MCF 10A (cell line): ENCODE measurements at regions of chr2 and their contacts with region 1.

Region 1: DNA sequence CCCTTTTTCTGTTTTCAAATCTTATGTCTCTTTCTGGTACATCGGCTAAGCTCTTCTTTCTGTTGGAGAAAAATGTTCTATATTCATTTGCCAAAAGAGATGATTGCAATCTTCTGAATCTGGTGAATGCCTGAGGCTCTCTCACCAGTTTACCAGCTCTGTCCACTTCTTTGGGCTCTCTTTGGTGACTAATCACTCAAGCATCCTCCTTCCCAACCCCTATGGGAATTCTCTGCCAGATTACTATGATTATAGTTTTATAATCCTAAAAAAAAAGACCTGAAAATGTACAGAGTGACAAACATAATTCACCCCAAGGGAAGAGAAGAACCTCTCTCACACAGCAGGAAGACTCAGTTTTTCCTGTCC is 187.3 kb downstream of the CAMKMT start:
- DNase-seq: peak; percentile 90
- H3K4me3 Mint-ChIP-seq: peak overlapping the region; percentile 57
- H3K27ac Mint-ChIP-seq: peak overlapping the region; percentile 93
- H3K4me1 Mint-ChIP-seq: peaks cover 69% of the 10 kb centered on the region
- H3K27me3 Mint-ChIP-seq: no peaks in the 10 kb centered on the region
- CTCF ChIP-seq: no peak

Region 2: DNA sequence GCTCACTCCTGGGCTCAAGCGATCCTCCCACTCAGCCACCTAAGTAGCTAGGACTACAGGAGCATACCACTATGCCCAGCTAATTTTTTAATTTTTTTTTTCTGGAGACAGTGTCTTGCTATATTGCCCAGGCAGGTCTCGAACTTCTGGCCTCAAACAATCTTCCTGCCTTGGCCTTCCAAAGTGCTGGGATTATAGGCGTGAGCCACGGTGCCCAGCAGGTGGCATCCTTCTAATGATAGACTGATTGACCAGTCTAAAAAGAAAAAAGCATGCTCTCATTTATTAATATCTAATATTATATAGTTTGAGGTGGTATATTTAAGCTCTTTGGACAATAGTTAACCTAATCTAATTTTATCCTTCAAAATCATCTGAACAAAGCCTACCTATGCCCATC is 11.3 kb after region 1 on chr2:
- CTCF ChIA-PET with region 1: interaction called, 5 read pairs
- POLR2A ChIA-PET with region 1: interaction called, 14 read pairs
- intact Hi-C with region 1: no loop called
- DNase-seq: peak; percentile 45
- H3K4me3 Mint-ChIP-seq: no peak overlapping the region
- H3K27ac Mint-ChIP-seq: no peak overlapping the region
- H3K4me1 Mint-ChIP-seq: peaks cover 15% of the 10 kb centered on the region
- H3K27me3 Mint-ChIP-seq: no peaks in the 10 kb centered on the region
- CTCF ChIP-seq: peak; percentile 30

Region 3: DNA sequence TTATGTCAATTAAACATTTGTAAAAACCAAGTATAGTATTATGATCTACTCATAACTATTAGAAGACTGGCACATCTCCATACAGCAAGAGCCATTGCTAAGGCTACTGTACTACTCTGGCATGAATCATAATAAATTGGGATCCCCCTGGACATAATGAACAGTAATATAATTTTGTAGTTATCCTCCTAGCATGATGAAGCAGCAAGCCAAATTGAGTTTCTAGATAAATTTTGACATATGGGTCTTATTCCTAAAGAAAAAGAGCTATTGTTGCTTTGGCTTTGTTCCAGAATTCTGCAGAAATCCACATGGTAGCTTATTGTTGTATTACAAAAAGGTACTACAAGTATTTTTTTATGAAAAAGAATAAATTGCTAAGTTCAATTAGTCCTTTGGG is 17.0 kb after region 1 on chr2:
- CTCF ChIA-PET with region 1: interaction called, 5 read pairs
- POLR2A ChIA-PET with region 1: interaction called, 14 read pairs
- intact Hi-C with region 1: no loop called
- DNase-seq: no peak
- H3K4me3 Mint-ChIP-seq: no peak overlapping the region
- H3K27ac Mint-ChIP-seq: no peak overlapping the region
- H3K4me1 Mint-ChIP-seq: peaks cover 9% of the 10 kb centered on the region
- H3K27me3 Mint-ChIP-seq: no peaks in the 10 kb centered on the region
- CTCF ChIP-seq: no peak

Region 4: DNA sequence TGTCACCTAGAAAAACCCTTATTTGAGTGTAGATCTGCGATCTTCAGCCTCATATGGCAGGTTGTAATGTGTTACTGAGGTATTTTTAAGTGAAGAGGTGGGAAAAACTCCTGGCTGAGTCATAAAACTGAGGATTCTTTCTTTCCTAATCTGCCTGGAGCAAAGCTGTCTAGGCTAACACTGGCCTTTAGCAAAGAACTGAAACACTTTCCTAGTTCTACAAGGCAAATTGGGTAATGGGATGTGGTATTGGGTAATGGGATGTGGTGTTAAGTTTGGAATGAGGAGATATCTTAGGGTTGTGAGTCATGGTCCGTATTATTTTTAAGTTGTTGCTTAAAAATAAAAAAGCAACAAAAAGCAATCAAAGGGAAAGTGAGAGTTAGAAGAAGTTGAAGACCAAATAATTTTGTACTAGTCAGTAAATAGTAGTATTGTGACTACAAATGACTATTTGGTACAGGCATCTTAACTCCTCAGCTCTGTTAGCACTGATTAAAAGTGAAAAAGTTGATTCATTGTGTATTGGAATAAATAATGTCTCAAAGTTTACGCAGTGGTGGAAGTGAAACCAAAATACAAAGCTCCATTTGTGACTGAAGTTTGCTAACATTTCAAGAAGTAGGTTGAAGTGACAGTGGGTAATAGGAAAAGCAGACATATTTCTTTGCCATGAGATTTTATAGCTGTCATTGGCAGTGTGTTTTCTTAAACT is 29.5 kb after region 1 on chr2:
- CTCF ChIA-PET with region 1: interaction called, 3 read pairs
- POLR2A ChIA-PET with region 1: interaction called, 15 read pairs
- intact Hi-C with region 1: no loop called
- DNase-seq: peak; percentile 97
- H3K4me3 Mint-ChIP-seq: peak overlapping the region; percentile 63
- H3K27ac Mint-ChIP-seq: peak overlapping the region; percentile 17
- H3K4me1 Mint-ChIP-seq: peaks cover 46% of the 10 kb centered on the region
- H3K27me3 Mint-ChIP-seq: no peaks in the 10 kb centered on the region
- CTCF ChIP-seq: no peak